ENCODE measurements at regions of chr5 and their contacts with region 1.

Region 1: DNA sequence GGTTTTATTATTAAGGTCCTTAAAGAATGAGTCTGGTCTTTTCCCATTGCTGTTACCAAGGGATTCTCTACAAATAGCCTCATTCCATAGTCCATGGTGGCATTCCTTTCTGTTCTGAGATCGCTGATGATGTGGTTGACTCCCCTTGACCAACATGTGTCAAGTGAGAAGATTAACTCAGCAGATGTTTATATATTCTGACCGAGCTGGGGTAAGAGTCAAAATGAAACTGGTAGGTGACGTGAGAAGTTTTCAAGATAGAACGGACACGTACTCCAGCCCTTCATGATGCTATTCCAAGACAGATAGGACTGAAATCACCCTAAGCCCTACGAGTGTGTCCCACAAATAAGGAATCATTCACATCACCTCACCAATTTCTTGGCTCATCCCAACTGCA is 155.5 kb upstream of the WWC1 start:
- DNase-seq: peak; percentile 54
- CTCF ChIP-seq: no peak

Region 2: DNA sequence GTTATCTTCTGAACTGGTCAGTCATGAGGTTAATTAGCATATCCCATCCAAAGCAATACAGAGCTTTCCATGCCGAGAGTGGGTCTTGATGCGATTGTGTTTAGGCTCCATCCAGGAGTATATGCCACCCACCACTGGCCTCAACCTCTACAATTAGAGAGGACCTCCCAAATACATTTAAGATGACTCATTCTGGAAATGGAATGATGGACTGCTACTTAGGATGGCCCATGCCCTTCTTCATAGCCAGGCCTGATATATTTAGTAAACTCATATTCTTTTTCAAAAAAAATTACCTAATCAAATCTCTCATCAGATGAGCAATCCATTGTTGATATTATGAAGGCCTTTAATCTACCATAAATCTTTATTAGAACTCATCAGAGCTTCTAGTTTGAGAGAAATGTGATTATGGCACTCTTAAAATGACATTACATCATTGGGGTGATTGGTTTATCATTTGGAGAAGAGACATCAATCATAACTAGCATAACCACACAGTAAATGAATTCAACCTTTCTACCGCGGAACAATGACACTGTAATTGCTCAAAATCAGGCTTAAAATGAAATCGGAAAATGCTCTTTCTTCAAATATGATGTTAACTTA is 258.7 kb before region 1 on chr5:
- CTCF ChIA-PET with region 1: no interaction called
- POLR2A ChIA-PET with region 1: no interaction called
- DNase-seq: no peak
- CTCF ChIP-seq: no peak

Region 3: GRCh38 chr5:167964529-167964928 is 171.4 kb before region 1 on chr5:
- CTCF ChIA-PET with region 1: no interaction called
- POLR2A ChIA-PET with region 1: no interaction called
- DNase-seq: no peak
- CTCF ChIP-seq: no peak

Region 4: DNA sequence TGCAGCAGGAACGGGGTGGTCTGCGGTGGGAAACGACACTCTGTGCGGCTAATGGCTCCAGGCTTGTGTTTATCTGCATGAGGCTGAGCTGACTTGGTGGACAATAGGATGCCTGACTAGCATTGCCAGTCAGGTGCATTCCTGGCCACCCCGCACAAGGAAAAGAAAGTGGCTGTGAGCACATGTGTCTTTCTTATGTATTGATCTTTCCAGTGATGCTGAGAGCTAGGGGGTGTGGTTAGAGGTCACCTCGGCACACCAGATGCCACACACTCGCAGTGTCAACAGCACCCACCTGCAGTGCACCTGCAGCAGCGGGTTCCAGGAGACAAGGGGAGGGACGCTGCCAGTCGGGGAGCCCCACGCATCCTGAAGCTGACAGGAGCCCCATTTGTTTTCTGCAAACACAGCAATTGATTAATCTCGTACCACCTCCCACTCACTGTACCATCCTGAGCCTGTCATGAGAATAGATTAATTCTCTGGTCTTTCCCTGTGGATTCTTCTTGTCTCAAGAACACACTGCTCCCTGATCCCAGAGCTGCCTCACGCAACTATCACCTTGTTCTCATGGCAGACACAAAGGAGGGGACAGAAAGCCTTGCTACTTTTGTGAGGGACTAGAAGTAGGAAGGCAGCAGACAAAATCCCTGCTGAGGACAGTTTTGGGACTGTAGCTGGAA is 96.2 kb before region 1 on chr5:
- CTCF ChIA-PET with region 1: no interaction called
- POLR2A ChIA-PET with region 1: no interaction called
- DNase-seq: no peak
- CTCF ChIP-seq: no peak

Region 5: DNA sequence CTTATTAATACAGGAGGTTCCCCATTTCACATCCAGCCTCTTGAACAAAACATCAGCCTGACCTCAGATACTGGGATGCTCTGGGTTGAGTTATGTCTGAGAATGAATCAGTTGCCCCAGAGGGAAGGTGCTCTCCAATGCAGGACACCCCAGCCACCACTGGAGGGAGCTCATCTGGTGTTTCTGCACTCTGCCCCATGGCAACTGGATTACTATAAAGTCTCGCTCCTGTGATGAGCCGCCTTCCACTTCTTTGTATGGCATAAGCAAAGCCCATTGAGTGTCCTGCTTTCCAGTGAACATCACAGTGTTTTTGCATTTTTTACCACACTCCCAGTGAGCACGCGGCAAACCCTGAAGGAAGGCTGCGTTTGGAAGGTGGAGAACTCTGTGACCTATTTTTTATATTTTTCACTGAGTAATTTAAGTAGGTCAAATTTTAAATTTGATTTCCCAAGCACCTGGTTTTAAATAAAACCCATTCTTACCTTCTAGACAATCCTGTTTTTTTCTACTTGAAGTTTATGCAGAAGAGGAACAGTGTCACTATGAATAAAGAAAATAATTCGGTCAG is 21.4 kb before region 1 on chr5:
- CTCF ChIA-PET with region 1: interaction called, 16 read pairs
- POLR2A ChIA-PET with region 1: no interaction called
- DNase-seq: peak; percentile 67
- CTCF ChIP-seq: peak; percentile 78

Region 6: DNA sequence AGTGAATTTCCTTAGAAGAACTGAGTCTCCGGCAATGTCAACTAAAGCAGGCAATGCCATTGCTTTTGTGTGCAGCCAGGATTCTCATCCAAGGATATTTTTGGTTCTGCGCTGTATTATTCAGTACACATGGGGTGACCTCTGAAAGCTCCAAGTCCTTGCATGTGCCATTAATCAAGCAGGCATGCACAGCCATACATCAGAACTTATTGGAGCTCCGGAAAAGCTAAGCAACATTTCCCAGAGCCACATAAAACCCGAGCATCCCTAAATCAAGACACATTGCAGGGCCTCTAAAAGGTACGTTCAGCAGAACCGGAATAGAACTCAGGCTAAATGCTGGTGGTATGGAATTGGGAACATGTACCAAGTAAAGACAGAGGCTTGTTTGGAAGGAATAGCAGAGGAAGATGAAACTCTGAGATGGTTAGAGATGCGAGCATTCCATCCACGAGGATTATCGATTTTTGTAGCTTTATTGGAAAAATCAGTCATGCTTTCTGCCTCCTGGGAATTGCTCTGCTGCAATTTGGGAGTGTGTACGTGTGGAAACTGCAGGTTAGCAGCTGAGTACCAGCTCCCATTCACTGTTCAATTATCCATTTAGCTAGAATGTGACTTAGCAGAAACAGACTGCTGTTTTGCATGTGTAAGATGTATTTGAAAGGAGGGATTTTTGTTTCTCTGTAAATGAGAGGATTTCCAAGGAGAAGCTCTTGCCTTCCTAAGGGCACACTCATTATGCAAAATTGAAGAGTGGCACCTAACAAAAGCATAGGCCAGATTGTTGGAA is 11.9 kb after region 1 on chr5:
- CTCF ChIA-PET with region 1: interaction called, 12 read pairs
- POLR2A ChIA-PET with region 1: no interaction called
- DNase-seq: no peak
- CTCF ChIP-seq: no peak

Region 7: DNA sequence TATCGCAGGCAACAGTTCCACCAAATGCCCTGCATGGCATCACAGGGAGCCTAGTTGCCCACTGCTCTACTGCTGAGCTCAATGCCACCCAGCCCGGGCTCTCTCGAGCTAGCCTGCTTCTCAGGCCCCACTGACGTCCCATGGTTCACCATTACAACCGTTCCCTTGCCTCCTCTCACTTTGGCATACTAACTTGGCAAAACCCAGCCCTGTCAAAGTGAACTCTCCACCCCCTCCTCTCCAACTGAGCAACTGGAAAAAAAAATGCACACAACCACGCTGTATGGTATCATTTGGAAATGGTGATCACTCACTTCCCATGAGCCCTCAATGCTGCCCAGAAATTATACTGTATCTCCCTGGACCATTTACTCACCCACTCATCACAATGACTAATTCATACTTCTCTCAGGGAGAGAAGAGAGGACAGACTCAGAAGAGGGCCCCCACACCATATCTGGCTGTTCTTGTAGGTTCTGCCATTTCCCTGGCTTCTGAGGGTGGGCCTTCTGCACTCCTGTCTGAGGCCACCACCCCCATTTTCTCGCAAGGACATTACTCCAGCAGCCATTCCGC is 298.9 kb after region 1 on chr5:
- CTCF ChIA-PET with region 1: no interaction called
- POLR2A ChIA-PET with region 1: no interaction called
- DNase-seq: no peak
- CTCF ChIP-seq: no peak